Caco-2 (cell line): ENCODE measurements at regions of chr12 and their contacts with region 1.

Region 1: DNA sequence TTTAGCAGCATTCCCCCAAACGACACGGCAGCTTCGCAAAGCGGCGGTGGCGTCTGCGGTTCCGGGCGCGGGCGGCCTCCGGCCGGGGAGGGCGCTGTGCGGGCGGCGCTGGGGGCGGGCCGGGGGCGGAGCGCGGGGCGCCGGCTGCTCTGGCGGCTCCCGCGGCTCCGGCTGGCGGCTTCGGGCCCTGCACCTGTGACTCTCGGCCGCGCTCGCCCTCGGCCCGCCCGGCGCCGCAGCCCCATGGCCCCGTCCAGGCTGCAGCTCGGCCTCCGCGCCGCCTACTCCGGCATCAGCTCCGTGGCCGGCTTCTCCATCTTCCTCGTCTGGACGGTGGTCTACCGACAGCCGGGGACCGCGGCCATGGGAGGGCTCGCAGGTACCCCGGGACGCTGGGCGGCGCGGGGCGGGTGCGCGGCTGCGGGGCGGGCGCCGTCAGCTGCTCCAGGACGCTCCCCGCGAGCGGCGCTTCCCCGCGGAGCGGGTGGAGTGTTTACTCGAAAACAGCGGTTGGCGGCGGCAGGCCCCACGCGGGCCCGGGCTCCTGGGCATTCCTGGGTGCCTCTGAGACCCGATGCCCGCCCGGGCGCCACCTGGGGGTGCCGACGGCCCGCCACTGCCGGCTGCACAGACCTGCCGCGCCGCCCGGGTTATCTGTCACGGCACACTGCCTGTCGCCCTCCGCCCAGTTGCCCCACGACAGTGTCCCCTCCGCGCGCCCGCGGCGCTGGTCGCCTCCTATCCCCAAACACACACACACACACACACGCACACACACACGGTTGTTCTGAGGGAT is at the start of gene SLC48A1:
- DNase-seq: peak; percentile 80 to 94
- H3K4me3 ChIP-seq: peak within 1 kb of the TSS; percentile 68
- H3K4me3 Mint-ChIP-seq: peak within 1 kb of the TSS; percentile 94
- H3K27ac Mint-ChIP-seq: peak within 1 kb of the TSS; percentile 94
- H3K4me1 ChIP-seq: peaks cover 34% of the 10 kb centered on the region
- H3K4me1 Mint-ChIP-seq: peaks cover 25% of the 10 kb centered on the region
- H3K27me3 ChIP-seq: no peaks in the 10 kb centered on the region
- H3K27me3 Mint-ChIP-seq: no peaks in the 10 kb centered on the region
- CTCF ChIP-seq: peak; percentile 11 to 38
- total RNA-seq, gene SLC48A1: 34.3 and 37.5 TPM in 2 replicates

Region 2: GRCh38 chr12:47686645-47687240 is 86.5 kb before region 1 on chr12:
- CTCF ChIA-PET with region 1: no interaction called
- POLR2A ChIA-PET with region 1: no interaction called
- intact Hi-C with region 1: no loop called
- DNase-seq: peak in 1 of 2 experiments; percentile 49
- H3K4me3 ChIP-seq: no peak overlapping the region
- H3K4me3 Mint-ChIP-seq: no peak overlapping the region
- H3K27ac Mint-ChIP-seq: no peak overlapping the region
- H3K4me1 ChIP-seq: no peaks in the 10 kb centered on the region; the same call in 1 of the 2 replicates
- H3K4me1 Mint-ChIP-seq: no peaks in the 10 kb centered on the region
- H3K27me3 ChIP-seq: no peaks in the 10 kb centered on the region
- H3K27me3 Mint-ChIP-seq: no peaks in the 10 kb centered on the region
- CTCF ChIP-seq: peak; percentile 56 to 86

Region 3: DNA sequence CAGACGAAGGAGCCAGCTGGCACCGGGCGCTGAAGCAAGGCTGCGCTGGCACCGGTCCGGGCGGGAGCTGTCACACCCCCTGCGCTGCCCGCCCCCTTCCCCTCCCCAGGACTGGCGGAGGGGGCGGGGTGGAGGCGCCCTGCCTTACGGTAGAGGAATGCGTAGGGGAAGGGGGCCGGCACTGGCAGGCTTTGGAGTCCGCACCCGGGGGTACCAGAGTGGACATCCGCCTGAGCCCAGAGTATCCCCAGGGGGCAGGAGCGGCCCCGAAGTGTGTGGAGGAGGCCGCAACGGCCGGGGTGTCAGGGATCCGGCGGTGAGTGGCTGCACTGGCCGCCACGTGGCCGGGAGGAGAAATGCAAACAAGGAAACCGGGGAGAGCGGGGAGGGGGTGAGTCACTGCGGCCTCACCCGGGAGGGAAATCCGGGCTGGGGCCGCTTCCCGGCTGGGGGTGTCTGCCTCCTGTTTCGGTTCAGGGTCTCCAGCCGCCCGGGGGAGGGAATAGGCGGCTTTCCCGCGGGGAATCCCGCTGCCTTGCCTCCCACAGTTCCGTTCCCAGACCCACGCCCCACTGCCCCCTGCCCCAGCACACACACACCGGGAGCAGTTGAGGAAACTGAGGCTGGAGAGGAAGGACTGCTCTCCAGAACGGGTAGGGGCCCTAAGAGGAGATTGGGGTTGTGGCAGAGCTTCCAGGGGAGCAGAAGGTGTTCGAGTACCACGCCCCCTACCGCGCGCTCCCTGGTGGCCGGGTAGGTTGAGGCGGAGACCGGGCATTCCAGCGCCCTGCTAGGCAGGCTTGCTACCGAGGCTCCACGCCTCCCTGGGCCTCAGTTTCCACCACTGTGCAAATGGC is 14.2 kb before region 1 on chr12 and contains the start of gene RAPGEF3:
- CTCF ChIA-PET with region 1: interaction called, 35 read pairs
- POLR2A ChIA-PET with region 1: interaction called, 3 read pairs
- intact Hi-C with region 1: loop called (anchors 1 kb)
- DNase-seq: peak; percentile 85 to 90
- H3K4me3 ChIP-seq: peak within 1 kb of the TSS; percentile 52
- H3K4me3 Mint-ChIP-seq: peak within 1 kb of the TSS; percentile 80
- H3K27ac Mint-ChIP-seq: peak within 1 kb of the TSS; percentile 56
- H3K4me1 ChIP-seq: peaks cover 18% of the 10 kb centered on the region
- H3K4me1 Mint-ChIP-seq: peaks cover 10% of the 10 kb centered on the region
- H3K27me3 ChIP-seq: no peaks in the 10 kb centered on the region
- H3K27me3 Mint-ChIP-seq: no peaks in the 10 kb centered on the region
- CTCF ChIP-seq: peak; percentile 82 to 85
- total RNA-seq, gene RAPGEF3: 1.2 and 2.3 TPM in 2 replicates

Region 4: GRCh38 chr12:48157018-48157888 is 384.0 kb after region 1 on chr12 and contains the start of gene ASB8:
- CTCF ChIA-PET with region 1: no interaction called
- POLR2A ChIA-PET with region 1: no interaction called
- intact Hi-C with region 1: no loop called
- DNase-seq: peak; percentile 99
- H3K4me3 ChIP-seq: peak within 1 kb of the TSS; percentile 75
- H3K4me3 Mint-ChIP-seq: peak within 1 kb of the TSS; percentile 97
- H3K27ac Mint-ChIP-seq: peak within 1 kb of the TSS; percentile 94
- H3K4me1 ChIP-seq: peaks cover 6% of the 10 kb centered on the region
- H3K4me1 Mint-ChIP-seq: no peaks in the 10 kb centered on the region
- H3K27me3 ChIP-seq: no peaks in the 10 kb centered on the region
- H3K27me3 Mint-ChIP-seq: no peaks in the 10 kb centered on the region
- CTCF ChIP-seq: peak; percentile 30 to 62
- total RNA-seq, gene ASB8: 27.8 and 30.6 TPM in 2 replicates

Region 5: GRCh38 chr12:48279101-48279500 is 505.8 kb after region 1 on chr12:
- CTCF ChIA-PET with region 1: no interaction called
- POLR2A ChIA-PET with region 1: no interaction called
- intact Hi-C with region 1: no loop called
- DNase-seq: no peak
- H3K4me3 ChIP-seq: no peak overlapping the region
- H3K4me3 Mint-ChIP-seq: no peak overlapping the region
- H3K27ac Mint-ChIP-seq: no peak overlapping the region
- H3K4me1 ChIP-seq: no peaks in the 10 kb centered on the region
- H3K4me1 Mint-ChIP-seq: peaks cover 6% of the 10 kb centered on the region
- H3K27me3 ChIP-seq: no peaks in the 10 kb centered on the region
- H3K27me3 Mint-ChIP-seq: peaks cover 2% of the 10 kb centered on the region
- CTCF ChIP-seq: no peak